ENCODE measurements at regions of chr1 and their contacts with region 1.

Region 1: DNA sequence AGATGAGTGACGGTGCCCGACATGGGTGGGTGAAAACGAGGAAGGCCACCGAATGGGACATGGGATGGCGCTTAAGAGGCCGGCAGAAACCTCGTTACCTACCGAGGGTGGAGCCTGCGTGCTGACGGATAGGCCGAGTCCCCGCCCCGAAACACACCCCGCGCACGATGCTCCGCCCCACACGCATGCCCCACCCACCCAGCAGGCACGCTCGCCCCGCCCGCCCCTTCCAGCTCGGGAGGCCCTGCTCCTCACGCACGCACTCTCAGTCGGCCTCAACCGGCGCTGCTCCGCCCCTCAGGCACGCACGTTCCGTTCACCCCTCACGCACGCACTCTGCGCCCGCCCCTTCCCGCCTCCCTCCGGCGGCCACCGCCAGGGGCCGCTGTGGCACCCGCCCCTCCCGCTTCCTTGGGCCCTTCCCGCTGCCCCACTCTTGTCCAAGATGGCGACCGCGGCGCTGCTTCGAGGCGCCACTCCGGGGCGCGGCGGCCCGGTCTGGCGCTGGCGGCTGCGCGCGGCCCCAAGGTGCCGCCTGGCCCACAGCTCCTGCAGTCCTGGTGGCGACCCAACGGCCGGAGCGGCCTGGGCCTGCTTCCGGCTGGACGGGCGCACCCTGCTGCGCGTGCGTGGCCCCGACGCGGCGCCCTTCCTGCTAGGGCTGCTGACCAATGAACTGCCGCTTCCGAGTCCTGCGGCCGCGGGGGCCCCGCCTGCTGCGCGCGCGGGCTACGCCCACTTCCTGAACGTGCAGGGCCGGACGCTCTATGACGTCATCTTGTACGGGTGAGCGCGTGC is at the start of gene IBA57:
- DNase-seq: peak; percentile 100
- H3K4me3 Mint-ChIP-seq: peak within 1 kb of the TSS; percentile 88
- H3K27ac Mint-ChIP-seq: peak within 1 kb of the TSS; percentile 96
- H3K4me1 Mint-ChIP-seq: peaks cover 46% of the 10 kb centered on the region
- H3K27me3 Mint-ChIP-seq: peaks cover 3% of the 10 kb centered on the region

Region 2: DNA sequence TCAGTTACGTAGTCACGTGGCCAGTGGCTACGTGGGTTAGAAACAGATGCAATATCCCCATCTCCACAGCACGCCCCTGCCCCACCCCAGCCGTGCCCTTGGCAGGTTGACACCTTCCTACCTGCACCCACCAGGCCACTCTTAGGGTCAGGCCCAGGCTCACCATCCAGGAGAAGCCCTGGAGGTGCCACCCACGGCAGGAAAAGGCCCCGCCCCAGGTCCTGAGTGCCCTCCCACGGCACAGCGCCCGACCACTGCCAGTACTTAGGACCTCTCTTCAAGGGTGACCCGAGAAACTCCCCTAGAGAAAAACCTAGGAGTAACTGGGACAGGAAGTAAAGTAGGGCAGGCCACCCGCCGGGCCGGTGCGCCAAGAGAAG is 64.0 kb before region 1 on chr1:
- CTCF ChIA-PET with region 1: no interaction called
- DNase-seq: peak; percentile 34
- H3K4me3 Mint-ChIP-seq: peak overlapping the region; percentile 94
- H3K27ac Mint-ChIP-seq: peak overlapping the region; percentile 63
- H3K4me1 Mint-ChIP-seq: peaks cover 30% of the 10 kb centered on the region
- H3K27me3 Mint-ChIP-seq: peaks cover 5% of the 10 kb centered on the region

Region 3: GRCh38 chr1:228131766-228132165 is 33.8 kb before region 1 on chr1:
- CTCF ChIA-PET with region 1: interaction called, 34 read pairs
- DNase-seq: no peak
- H3K4me3 Mint-ChIP-seq: no peak overlapping the region
- H3K27ac Mint-ChIP-seq: no peak overlapping the region
- H3K4me1 Mint-ChIP-seq: peaks cover 4% of the 10 kb centered on the region
- H3K27me3 Mint-ChIP-seq: peaks cover 60% of the 10 kb centered on the region

Measured in activated naive CD4-positive, alpha-beta T cell treated with anti-CD3 and anti-CD28 coated beads, Interleukin-2, amount 10 ng/mL, durations not matched to agents 7 days and 5 days (primary cell).